Testis (tissue), 5 donors: ENCODE measurements at regions of chr15 and their contacts with region 1.

Region 1: GRCh38 chr15:86915811-86916331 is 836.2 kb downstream of the AGBL1 start:
- DNase-seq: peak; percentile 29
- H3K4me3 ChIP-seq: no peak overlapping the region
- H3K27ac ChIP-seq: no peak overlapping the region
- H3K4me1 ChIP-seq: no peaks in the 10 kb centered on the region
- H3K27me3 ChIP-seq: no peaks in the 10 kb centered on the region
- CTCF ChIP-seq: peak; percentile 28 to 49 (median 29)
- POLR2A ChIP-seq: no peak

Region 2: GRCh38 chr15:88246666-88247446 is 1331.0 kb after region 1 on chr15:
- intact Hi-C with region 1: loop called (anchors 5 kb)
- DNase-seq: peak; percentile 88
- H3K4me3 ChIP-seq: no peak overlapping the region
- H3K27ac ChIP-seq: no peak overlapping the region
- H3K4me1 ChIP-seq: no peaks in the 10 kb centered on the region
- H3K27me3 ChIP-seq: no peaks in the 10 kb centered on the region
- CTCF ChIP-seq: peak; percentile 84 to 97 (median 94)
- POLR2A ChIP-seq: no peak